ENCODE measurements at regions of chr6 and their contacts with region 1.

Region 1: DNA sequence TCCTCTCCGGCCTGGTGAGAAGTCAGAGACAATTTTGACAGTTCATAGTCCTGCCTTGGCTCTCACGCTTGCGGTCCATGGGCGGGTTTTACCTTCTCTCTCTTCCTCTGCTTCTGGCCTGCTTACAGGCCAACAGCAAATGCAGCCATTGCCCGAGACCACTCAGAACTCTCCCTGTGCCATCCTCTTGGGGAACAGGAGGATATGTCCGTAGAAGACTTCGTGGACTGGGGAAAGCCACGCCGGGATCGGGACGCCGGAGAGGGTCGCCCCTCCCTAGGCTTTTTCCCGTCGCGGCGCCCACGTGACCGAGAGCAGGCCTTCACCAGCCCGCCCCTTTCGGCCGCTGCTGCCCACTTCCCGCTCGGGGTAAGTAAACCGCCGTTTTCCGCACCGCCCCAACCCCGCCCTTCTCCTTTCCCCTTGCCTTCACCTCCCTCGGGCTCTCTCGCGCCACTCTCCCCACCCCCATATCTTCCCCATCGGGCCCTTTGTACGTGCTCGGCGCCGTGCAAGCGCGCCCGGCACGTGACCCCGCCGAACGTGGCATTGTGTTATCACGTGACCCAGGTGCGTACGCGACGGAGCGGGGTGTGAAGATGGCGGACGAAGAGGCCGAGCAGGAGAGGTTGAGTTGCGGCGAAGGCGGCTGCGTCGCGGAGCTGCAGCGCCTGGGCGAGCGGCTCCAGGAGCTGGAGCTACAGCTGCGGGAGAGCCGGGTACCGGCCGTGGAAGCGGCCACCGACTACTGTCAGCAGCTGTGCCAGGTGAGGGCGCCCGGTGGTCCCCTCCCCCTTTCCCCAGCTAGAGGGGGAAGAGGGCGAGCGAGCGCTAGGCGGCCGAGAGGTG is at the start of gene ZNF292:
- DNase-seq: peak; percentile 94 to 95
- ATAC-seq: peak; percentile 89 to 96 (median 93)
- H3K4me3 ChIP-seq: peak within 1 kb of the TSS; percentile 86 to 98 (median 93)
- H3K27ac ChIP-seq: peak within 1 kb of the TSS; percentile 87 to 99 (median 93)
- H3K4me1 ChIP-seq: peaks cover 0 to 71% (median 55%) of the 10 kb centered on the region in 9 donors
- H3K27me3 ChIP-seq: no peaks in the 10 kb centered on the region
- CTCF ChIP-seq: peak in 1 of 9 donors; percentile 30
- total RNA-seq, gene ZNF292: 28.0 to 38.2 (median 31.7) TPM

Region 2: DNA sequence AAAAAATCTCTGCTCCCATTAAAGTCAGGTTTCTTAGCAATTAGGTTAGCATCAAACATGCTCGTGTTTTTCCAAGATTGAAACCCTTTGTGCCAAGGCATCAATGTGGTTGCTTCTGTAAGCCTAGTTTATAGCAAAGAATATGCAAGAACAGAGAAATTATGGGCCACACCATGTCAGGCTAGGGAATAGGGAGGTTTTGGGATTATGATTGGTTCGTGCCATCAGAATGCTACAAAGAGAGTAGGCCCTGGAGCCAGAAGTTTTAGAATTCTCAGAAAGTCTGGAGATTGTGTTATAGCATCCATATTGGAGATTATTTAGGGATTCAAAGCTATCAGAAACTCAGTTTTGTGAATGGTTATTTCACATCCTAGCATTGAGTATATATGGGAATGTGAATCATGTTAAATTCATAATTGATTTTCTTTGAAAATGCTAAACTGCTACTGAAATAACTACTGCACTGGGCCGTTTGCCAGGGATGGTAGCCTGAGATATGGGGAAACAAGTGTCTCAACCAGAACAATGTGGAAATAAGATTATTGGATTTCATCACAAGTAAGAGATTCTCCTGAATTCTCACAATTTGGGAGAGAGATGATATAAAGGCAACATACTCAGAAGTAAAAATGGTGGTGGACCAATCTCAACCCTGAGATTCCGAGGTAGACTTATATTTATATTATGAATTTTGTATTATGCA is 45.4 kb after region 1 on chr6:
- intact Hi-C with region 1: loop called in 3 of 10 experiments (anchors 5 to 10 kb)
- DNase-seq: no peak
- ATAC-seq: no peak
- H3K4me3 ChIP-seq: no peak overlapping the region
- H3K27ac ChIP-seq: peak overlapping the region in 4 of 10 donors; percentile 13 to 41 (median 24)
- H3K4me1 ChIP-seq: peaks cover 0 to 59% (median 31%) of the 10 kb centered on the region in 9 donors
- H3K27me3 ChIP-seq: no peaks in the 10 kb centered on the region
- CTCF ChIP-seq: no peak

Region 3: GRCh38 chr6:87230801-87231200 is 75.6 kb after region 1 on chr6:
- intact Hi-C with region 1: loop called in 3 of 10 experiments (anchors 5 kb)
- DNase-seq: no peak
- ATAC-seq: no peak
- H3K4me3 ChIP-seq: no peak overlapping the region
- H3K27ac ChIP-seq: no peak overlapping the region
- H3K4me1 ChIP-seq: no peaks in the 10 kb centered on the region
- H3K27me3 ChIP-seq: no peaks in the 10 kb centered on the region
- CTCF ChIP-seq: no peak

Region 4: GRCh38 chr6:87333591-87334181 is 178.5 kb after region 1 on chr6:
- intact Hi-C with region 1: loop called in 1 of 10 experiments (anchors 10 kb)
- DNase-seq: peak in 1 of 2 donors; percentile 42
- ATAC-seq: peak in 7 of 8 donors; percentile 62 to 83 (median 77)
- H3K4me3 ChIP-seq: peak overlapping the region in 2 of 10 donors; percentile 2 to 5
- H3K27ac ChIP-seq: peak overlapping the region in 6 of 10 donors; percentile 26 to 69 (median 52)
- H3K4me1 ChIP-seq: peaks cover 3 to 39% (median 26%) of the 10 kb centered on the region in 9 donors
- H3K27me3 ChIP-seq: no peaks in the 10 kb centered on the region
- CTCF ChIP-seq: no peak

Region 5: GRCh38 chr6:87431273-87431672 is 276.1 kb after region 1 on chr6:
- intact Hi-C with region 1: no loop called
- DNase-seq: no peak
- ATAC-seq: no peak
- H3K4me3 ChIP-seq: no peak overlapping the region
- H3K27ac ChIP-seq: no peak overlapping the region
- H3K4me1 ChIP-seq: no peaks in the 10 kb centered on the region
- H3K27me3 ChIP-seq: no peaks in the 10 kb centered on the region
- CTCF ChIP-seq: no peak

Region 6: GRCh38 chr6:87701676-87702588 is 546.7 kb after region 1 on chr6 and contains the start of gene AKIRIN2:
- intact Hi-C with region 1: loop called in 1 of 10 experiments (anchors 10 kb)
- DNase-seq: peak; percentile 96 to 97
- ATAC-seq: peak; percentile 94 to 98 (median 96)
- H3K4me3 ChIP-seq: peak within 1 kb of the TSS; percentile 77 to 99 (median 94)
- H3K27ac ChIP-seq: peak within 1 kb of the TSS; percentile 90 to 99 (median 98)
- H3K4me1 ChIP-seq: peaks cover 0 to 45% (median 34%) of the 10 kb centered on the region in 9 donors
- H3K27me3 ChIP-seq: no peaks in the 10 kb centered on the region
- CTCF ChIP-seq: no peak
- total RNA-seq, gene AKIRIN2: 33.9 to 56.0 (median 43.8) TPM